AG04450 (cell line): ENCODE measurements at regions of chr2 and their contacts with region 1.

Region 1: GRCh38 chr2:160252278-160252887 is 52.3 kb upstream of the ITGB6 start:
- DNase-seq: no peak
- H3K4me3 ChIP-seq: no peak overlapping the region
- H3K27ac ChIP-seq: no peak overlapping the region
- H3K27me3 ChIP-seq: no peaks in the 10 kb centered on the region
- CTCF ChIP-seq: peak; percentile 84

Region 2: GRCh38 chr2:160224060-160224459 is 28.3 kb before region 1 on chr2:
- CTCF ChIA-PET with region 1: interaction called, 18 read pairs
- POLR2A ChIA-PET with region 1: no interaction called
- DNase-seq: peak; percentile 71
- H3K4me3 ChIP-seq: peak overlapping the region; percentile 7; the same call in 1 of the 2 replicates
- H3K27ac ChIP-seq: peak overlapping the region; percentile 71
- H3K27me3 ChIP-seq: no peaks in the 10 kb centered on the region
- CTCF ChIP-seq: no peak

Region 3: DNA sequence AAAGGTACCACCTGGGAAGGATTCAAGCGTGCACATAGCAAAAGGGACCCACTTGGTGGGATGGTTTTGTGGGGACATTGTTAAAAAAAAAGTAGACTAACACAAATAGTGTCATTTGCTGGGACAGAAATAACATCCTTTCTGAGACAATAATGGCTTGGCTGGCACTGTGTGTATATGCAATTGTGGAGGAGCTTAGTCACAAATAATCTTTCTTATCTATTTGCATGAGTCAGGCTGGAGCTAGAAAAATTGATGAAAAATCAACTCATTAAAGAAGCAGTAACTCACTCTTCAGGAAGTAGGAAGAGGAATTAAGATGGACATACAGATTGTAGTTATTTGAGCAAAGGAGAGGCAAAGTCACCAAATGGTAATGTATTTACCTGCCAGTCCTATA is 22.8 kb before region 1 on chr2:
- CTCF ChIA-PET with region 1: interaction called, 18 read pairs
- POLR2A ChIA-PET with region 1: no interaction called
- DNase-seq: no peak
- H3K4me3 ChIP-seq: no peak overlapping the region
- H3K27ac ChIP-seq: no peak overlapping the region
- H3K27me3 ChIP-seq: no peaks in the 10 kb centered on the region
- CTCF ChIP-seq: no peak

Region 4: GRCh38 chr2:160241251-160242137 is 10.9 kb before region 1 on chr2:
- CTCF ChIA-PET with region 1: interaction called, 18 read pairs
- POLR2A ChIA-PET with region 1: no interaction called
- DNase-seq: no peak
- H3K4me3 ChIP-seq: no peak overlapping the region
- H3K27ac ChIP-seq: no peak overlapping the region
- H3K27me3 ChIP-seq: no peaks in the 10 kb centered on the region
- CTCF ChIP-seq: no peak

Region 5: DNA sequence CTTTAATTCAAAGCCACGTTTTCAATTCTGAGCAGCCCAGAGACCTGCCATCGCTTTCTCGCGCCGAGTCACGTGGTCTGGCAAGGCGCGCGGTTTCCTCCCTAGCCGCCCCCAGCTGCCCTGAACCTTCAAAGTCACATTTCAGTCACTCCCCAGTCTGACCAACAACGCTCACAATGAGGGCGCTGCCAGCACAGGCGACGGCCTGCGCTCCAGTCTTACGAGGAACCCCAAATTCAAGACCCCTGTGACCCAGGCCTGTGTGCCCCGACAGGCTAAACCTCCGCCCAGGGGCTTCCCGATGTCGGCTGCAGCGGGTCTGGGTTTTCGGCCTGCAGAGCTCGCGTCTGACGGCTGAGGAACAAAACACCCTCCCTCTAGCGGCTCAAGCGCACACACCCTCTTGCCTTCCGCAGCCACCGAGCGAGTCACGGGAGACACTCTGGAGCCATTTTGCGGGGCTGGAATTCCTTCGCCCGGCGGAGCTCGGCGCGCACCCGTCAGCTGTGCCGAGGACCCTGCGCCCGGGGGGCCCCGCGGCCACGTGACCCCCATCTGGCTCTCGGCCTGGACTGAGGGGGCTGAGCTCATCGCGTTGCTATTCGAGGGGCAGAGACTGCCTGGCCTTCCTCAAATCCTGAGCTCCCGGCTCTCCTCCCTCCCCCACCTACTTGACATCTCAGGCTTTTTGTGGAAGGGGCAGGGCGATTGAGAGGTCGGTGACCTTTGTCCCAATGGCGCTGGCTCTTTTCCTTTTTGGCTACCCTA is 17.6 kb after region 1 on chr2:
- CTCF ChIA-PET with region 1: interaction called, 11 read pairs
- POLR2A ChIA-PET with region 1: interaction called, 6 read pairs
- DNase-seq: peak; percentile 80
- H3K4me3 ChIP-seq: peak overlapping the region; percentile 52
- H3K27ac ChIP-seq: peak overlapping the region; percentile 96
- H3K27me3 ChIP-seq: no peaks in the 10 kb centered on the region
- CTCF ChIP-seq: peak; percentile 75

Region 6: DNA sequence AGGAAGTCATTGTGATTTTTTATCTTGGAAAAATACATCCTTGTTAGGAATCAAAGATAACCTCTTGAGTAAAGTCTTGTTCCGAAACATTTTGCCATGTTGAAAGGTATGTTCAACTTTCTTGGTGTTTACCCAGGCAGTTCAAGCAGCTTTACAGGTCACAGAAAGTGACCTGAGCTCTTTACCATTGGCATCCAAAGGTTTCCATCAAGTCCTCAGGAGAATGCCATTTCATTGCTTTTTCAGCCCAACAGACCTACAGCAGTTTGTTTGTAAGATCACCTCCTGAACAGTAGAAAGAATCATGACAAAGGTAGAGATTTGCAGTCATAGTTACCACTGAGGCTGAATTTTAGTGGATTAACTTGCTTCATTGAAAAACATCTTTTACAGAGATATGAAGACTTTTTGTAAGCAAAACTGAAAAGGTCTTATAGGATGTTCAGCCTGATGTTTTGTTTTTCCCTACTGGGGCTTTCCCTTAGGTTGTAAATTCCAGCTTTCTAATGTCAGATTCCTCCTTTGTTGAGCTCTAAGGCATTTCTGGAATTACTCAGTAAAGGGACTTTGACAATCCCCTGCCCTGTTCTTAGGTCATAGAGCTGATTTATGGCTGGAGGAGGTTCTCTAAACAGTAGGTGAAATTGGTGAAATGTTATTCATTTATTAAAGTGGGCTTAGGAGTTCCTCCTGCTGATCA is 478.1 kb after region 1 on chr2:
- CTCF ChIA-PET with region 1: no interaction called
- POLR2A ChIA-PET with region 1: no interaction called
- DNase-seq: no peak
- H3K4me3 ChIP-seq: no peak overlapping the region
- H3K27ac ChIP-seq: no peak overlapping the region
- H3K27me3 ChIP-seq: no peaks in the 10 kb centered on the region
- CTCF ChIP-seq: no peak

Region 7: GRCh38 chr2:160994141-160995002 is 742.0 kb after region 1 on chr2:
- CTCF ChIA-PET with region 1: interaction called, 26 read pairs
- POLR2A ChIA-PET with region 1: no interaction called
- DNase-seq: peak; percentile 76
- H3K4me3 ChIP-seq: no peak overlapping the region
- H3K27ac ChIP-seq: no peak overlapping the region
- H3K27me3 ChIP-seq: no peaks in the 10 kb centered on the region
- CTCF ChIP-seq: peak; percentile 78